ENCODE measurements at regions of chr18 and their contacts with region 1.

Region 1: DNA sequence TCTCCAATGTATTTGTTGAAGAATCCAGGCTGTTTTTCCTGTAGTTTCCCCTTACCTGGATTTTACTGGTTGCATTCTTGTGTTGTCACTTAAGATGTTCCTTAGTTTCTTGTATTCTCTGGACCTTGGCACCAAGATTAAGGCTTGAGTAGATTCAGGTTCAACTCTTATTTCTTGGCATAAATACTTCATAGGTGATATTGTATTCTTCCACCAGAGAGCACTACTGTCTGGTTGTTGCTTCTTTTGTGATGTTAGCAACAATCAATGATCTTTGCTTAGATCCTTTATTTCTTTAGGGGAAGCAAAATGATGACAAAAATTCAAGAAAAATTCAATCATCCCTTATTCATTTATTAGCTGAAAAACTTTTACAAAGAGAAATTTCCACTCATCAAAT is 211.1 kb downstream of the LOXHD1 start:
- DNase-seq: no peak
- ATAC-seq: no peak
- H3K4me3 ChIP-seq: no peak overlapping the region
- H3K27ac ChIP-seq: no peak overlapping the region
- H3K4me1 ChIP-seq: no peaks in the 10 kb centered on the region
- H3K27me3 ChIP-seq: no peaks in the 10 kb centered on the region
- CTCF ChIP-seq: peak in 1 of 9 donors; percentile 5

Region 2: DNA sequence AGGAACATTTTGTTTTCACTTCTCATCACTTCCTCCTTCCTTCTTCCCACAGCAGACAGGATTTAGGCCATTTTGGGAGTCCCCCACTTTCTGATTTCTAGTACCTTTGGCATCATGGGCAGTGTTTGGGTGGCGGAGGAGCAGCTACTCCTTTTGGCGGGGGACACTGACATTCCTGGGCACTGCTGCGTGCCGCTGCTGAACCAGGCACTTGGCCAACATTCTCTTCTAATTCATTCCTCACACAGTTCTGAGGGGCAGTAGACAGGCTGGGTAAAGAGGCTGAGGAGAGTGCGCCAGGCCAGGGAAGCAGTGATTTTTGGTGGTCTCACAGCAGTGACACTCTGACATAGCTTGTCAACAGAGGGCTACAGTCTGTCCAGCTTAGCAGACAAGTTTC is 59.1 kb before region 1 on chr18:
- intact Hi-C with region 1: loop called in 1 of 10 experiments (anchors 10 kb)
- DNase-seq: peak; percentile 43 to 64
- ATAC-seq: peak; percentile 73 to 95 (median 88)
- H3K4me3 ChIP-seq: no peak overlapping the region
- H3K27ac ChIP-seq: peak overlapping the region in 7 of 10 donors; percentile 24 to 68 (median 59)
- H3K4me1 ChIP-seq: peaks cover 9 to 41% (median 20%) of the 10 kb centered on the region in 9 donors
- H3K27me3 ChIP-seq: no peaks in the 10 kb centered on the region
- CTCF ChIP-seq: no peak

Region 3: GRCh38 chr18:46555724-46556123 is 109.8 kb after region 1 on chr18:
- intact Hi-C with region 1: no loop called
- DNase-seq: peak; percentile 11 to 36
- ATAC-seq: peak; percentile 55 to 85 (median 72)
- H3K4me3 ChIP-seq: no peak overlapping the region
- H3K27ac ChIP-seq: no peak overlapping the region
- H3K4me1 ChIP-seq: no peaks in the 10 kb centered on the region
- H3K27me3 ChIP-seq: no peaks in the 10 kb centered on the region
- CTCF ChIP-seq: peak; percentile 37 to 75 (median 65)

Measured in heart right ventricle (tissue), 16 donors.